Endothelial cell of umbilical vein (primary cell): ENCODE measurements at regions of chr17 and their contacts with region 1.

Region 1: GRCh38 chr17:81959362-81960129 is 1.4 kb downstream of the NOTUM start:
- DNase-seq: peak; percentile 18
- H3K4me3 ChIP-seq: no peak overlapping the region
- H3K27ac ChIP-seq: no peak overlapping the region
- H3K4me1 ChIP-seq: no peaks in the 10 kb centered on the region
- H3K27me3 ChIP-seq: peaks cover 34 to 47% of the 10 kb centered on the region in 2 experiments
- CTCF ChIP-seq: peak; percentile 60 to 75
- POLR2A ChIP-seq: no peak

Region 2: GRCh38 chr17:81948635-81949378 is 10.7 kb before region 1 on chr17:
- CTCF ChIA-PET with region 1: interaction called, 33 read pairs
- POLR2A ChIA-PET with region 1: no interaction called
- dilution Hi-C with region 1: no loop called
- intact Hi-C with region 1: no loop called
- DNase-seq: no peak
- H3K4me3 ChIP-seq: no peak overlapping the region
- H3K27ac ChIP-seq: no peak overlapping the region
- H3K4me1 ChIP-seq: no peaks in the 10 kb centered on the region
- H3K27me3 ChIP-seq: peaks cover 0 to 5% of the 10 kb centered on the region in 2 experiments
- CTCF ChIP-seq: no peak
- POLR2A ChIP-seq: no peak

Region 3: GRCh38 chr17:81991684-81992305 is 32.2 kb after region 1 on chr17:
- CTCF ChIA-PET with region 1: interaction called, 13 read pairs
- POLR2A ChIA-PET with region 1: no interaction called
- dilution Hi-C with region 1: no loop called
- intact Hi-C with region 1: no loop called
- DNase-seq: peak; percentile 36
- H3K4me3 ChIP-seq: no peak overlapping the region
- H3K27ac ChIP-seq: no peak overlapping the region
- H3K4me1 ChIP-seq: peaks cover 2% of the 10 kb centered on the region
- H3K27me3 ChIP-seq: no peaks in the 10 kb centered on the region
- CTCF ChIP-seq: no peak
- POLR2A ChIP-seq: no peak

Region 4: GRCh38 chr17:82013341-82013740 is 53.8 kb after region 1 on chr17:
- CTCF ChIA-PET with region 1: interaction called, 345 read pairs
- POLR2A ChIA-PET with region 1: no interaction called
- dilution Hi-C with region 1: no loop called
- intact Hi-C with region 1: no loop called
- DNase-seq: no peak
- H3K4me3 ChIP-seq: no peak overlapping the region
- H3K27ac ChIP-seq: no peak overlapping the region
- H3K4me1 ChIP-seq: no peaks in the 10 kb centered on the region
- H3K27me3 ChIP-seq: no peaks in the 10 kb centered on the region
- CTCF ChIP-seq: no peak
- POLR2A ChIP-seq: no peak

Region 5: GRCh38 chr17:82030470-82031302 is 71.1 kb after region 1 on chr17:
- CTCF ChIA-PET with region 1: interaction called, 32 read pairs
- POLR2A ChIA-PET with region 1: no interaction called
- dilution Hi-C with region 1: no loop called
- intact Hi-C with region 1: no loop called
- DNase-seq: peak; percentile 81
- H3K4me3 ChIP-seq: peak overlapping the region; percentile 51 to 78 (median 53)
- H3K27ac ChIP-seq: no peak overlapping the region
- H3K4me1 ChIP-seq: peaks cover 10% of the 10 kb centered on the region
- H3K27me3 ChIP-seq: no peaks in the 10 kb centered on the region
- CTCF ChIP-seq: peak; percentile 82 to 98
- POLR2A ChIP-seq: no peak

Region 6: GRCh38 chr17:82153745-82154375 is 194.3 kb after region 1 on chr17:
- CTCF ChIA-PET with region 1: interaction called, 12 read pairs
- POLR2A ChIA-PET with region 1: no interaction called
- dilution Hi-C with region 1: no loop called
- intact Hi-C with region 1: no loop called
- DNase-seq: peak; percentile 56
- H3K4me3 ChIP-seq: no peak overlapping the region
- H3K27ac ChIP-seq: no peak overlapping the region
- H3K4me1 ChIP-seq: no peaks in the 10 kb centered on the region
- H3K27me3 ChIP-seq: no peaks in the 10 kb centered on the region
- CTCF ChIP-seq: peak; percentile 72 to 92
- POLR2A ChIP-seq: no peak